CD8-positive, alpha-beta memory T cell (primary cell): ENCODE measurements at regions of chr12 and their contacts with region 1.

Region 1: GRCh38 chr12:26113853-26114719 is 10.8 kb downstream of the BHLHE41 start:
- DNase-seq: peak; percentile 26 to 69 (median 43)
- H3K4me3 ChIP-seq: peak overlapping the region; percentile 59
- H3K4me3 Mint-ChIP-seq: peak overlapping the region; percentile 61 to 87 (median 69)
- H3K27ac ChIP-seq: no peak overlapping the region
- H3K27ac Mint-ChIP-seq: peak overlapping the region in 3 of 8 donors; percentile 11 to 52 (median 28)
- H3K4me1 ChIP-seq: peaks cover 4% of the 10 kb centered on the region
- H3K4me1 Mint-ChIP-seq: peaks cover 8 to 13% (median 10%) of the 10 kb centered on the region in 3 donors
- H3K27me3 ChIP-seq: no peaks in the 10 kb centered on the region
- H3K27me3 Mint-ChIP-seq: peaks cover 44 to 72% of the 10 kb centered on the region in 2 donors

Region 2: GRCh38 chr12:26817183-26817591 is 703.1 kb after region 1 on chr12:
- CTCF ChIA-PET with region 1: no interaction called
- POLR2A ChIA-PET with region 1: interaction called, 10 read pairs
- DNase-seq: no peak
- H3K4me3 ChIP-seq: no peak overlapping the region
- H3K4me3 Mint-ChIP-seq: no peak overlapping the region
- H3K27ac ChIP-seq: no peak overlapping the region
- H3K27ac Mint-ChIP-seq: peak overlapping the region in 2 of 8 donors; percentile 40 to 53
- H3K4me1 ChIP-seq: no peaks in the 10 kb centered on the region
- H3K4me1 Mint-ChIP-seq: peaks cover 6 to 26% (median 16%) of the 10 kb centered on the region in 3 donors
- H3K27me3 ChIP-seq: no peaks in the 10 kb centered on the region
- H3K27me3 Mint-ChIP-seq: no peaks in the 10 kb centered on the region